Posterior vena cava (tissue), 2 donors: ENCODE measurements at regions of chr10 and their contacts with region 1.

Region 1: GRCh38 chr10:93813507-93814465 is 56.0 kb downstream of the LGI1 start:
- DNase-seq: peak; percentile 85

Region 2: GRCh38 chr10:93702211-93703001 is 111.4 kb before region 1 on chr10 and contains the start of gene FRA10AC1:
- intact Hi-C with region 1: loop called in 1 of 2 experiments (anchors 2 kb)
- DNase-seq: peak; percentile 98
- total RNA-seq, gene FRA10AC1: 15.1 to 24.4 TPM